ENCODE measurements at regions of chr19 and their contacts with region 1.

Region 1: GRCh38 chr19:43532962-43533545 is at the start of gene ZNF575:
- DNase-seq: peak; percentile 61 to 91 (median 87)
- ATAC-seq: peak; percentile 64
- H3K4me3 ChIP-seq: peak within 1 kb of the TSS; percentile 98
- H3K4me3 Mint-ChIP-seq: peak within 1 kb of the TSS; percentile 88 to 98 (median 95)
- H3K27ac ChIP-seq: peak within 1 kb of the TSS; percentile 68
- H3K27ac Mint-ChIP-seq: peak within 1 kb of the TSS; percentile 90 to 98 (median 95)
- H3K4me1 ChIP-seq: peaks cover 12 to 14% of the 10 kb centered on the region in 2 donors
- H3K4me1 Mint-ChIP-seq: peaks cover 5 to 27% (median 18%) of the 10 kb centered on the region in 7 donors
- H3K27me3 ChIP-seq: no peaks in the 10 kb centered on the region
- H3K27me3 Mint-ChIP-seq: no peaks in the 10 kb centered on the region
- total RNA-seq, gene ZNF575: 4.5 to 10.7 (median 5.6) TPM

Region 2: GRCh38 chr19:43545981-43546380 is 12.9 kb after region 1 on chr19:
- CTCF ChIA-PET with region 1: no interaction called
- POLR2A ChIA-PET with region 1: no interaction called
- intact Hi-C with region 1: no loop called
- DNase-seq: no peak
- ATAC-seq: no peak
- H3K4me3 ChIP-seq: no peak overlapping the region
- H3K4me3 Mint-ChIP-seq: no peak overlapping the region
- H3K27ac ChIP-seq: no peak overlapping the region
- H3K27ac Mint-ChIP-seq: peak overlapping the region in 3 of 9 donors; percentile 33 to 74 (median 56)
- H3K4me1 ChIP-seq: no peaks in the 10 kb centered on the region
- H3K4me1 Mint-ChIP-seq: peaks cover 0 to 4% (median 0%) of the 10 kb centered on the region in 7 donors
- H3K27me3 ChIP-seq: no peaks in the 10 kb centered on the region
- H3K27me3 Mint-ChIP-seq: no peaks in the 10 kb centered on the region

Region 3: GRCh38 chr19:43562698-43563241 is 29.7 kb after region 1 on chr19:
- CTCF ChIA-PET with region 1: interaction called, 4 read pairs
- POLR2A ChIA-PET with region 1: interaction called, 16 read pairs
- intact Hi-C with region 1: loop called (anchors 1 to 2 kb)
- DNase-seq: peak; percentile 43 to 83 (median 75)
- ATAC-seq: peak; percentile 91
- H3K4me3 ChIP-seq: peak overlapping the region; percentile 32
- H3K4me3 Mint-ChIP-seq: peak overlapping the region; percentile 63 to 97 (median 87)
- H3K27ac ChIP-seq: peak overlapping the region; percentile 79
- H3K27ac Mint-ChIP-seq: peak overlapping the region; percentile 75 to 99 (median 96)
- H3K4me1 ChIP-seq: peaks cover 31 to 40% of the 10 kb centered on the region in 2 donors
- H3K4me1 Mint-ChIP-seq: peaks cover 33 to 65% (median 63%) of the 10 kb centered on the region in 7 donors
- H3K27me3 ChIP-seq: no peaks in the 10 kb centered on the region
- H3K27me3 Mint-ChIP-seq: no peaks in the 10 kb centered on the region

Region 4: DNA sequence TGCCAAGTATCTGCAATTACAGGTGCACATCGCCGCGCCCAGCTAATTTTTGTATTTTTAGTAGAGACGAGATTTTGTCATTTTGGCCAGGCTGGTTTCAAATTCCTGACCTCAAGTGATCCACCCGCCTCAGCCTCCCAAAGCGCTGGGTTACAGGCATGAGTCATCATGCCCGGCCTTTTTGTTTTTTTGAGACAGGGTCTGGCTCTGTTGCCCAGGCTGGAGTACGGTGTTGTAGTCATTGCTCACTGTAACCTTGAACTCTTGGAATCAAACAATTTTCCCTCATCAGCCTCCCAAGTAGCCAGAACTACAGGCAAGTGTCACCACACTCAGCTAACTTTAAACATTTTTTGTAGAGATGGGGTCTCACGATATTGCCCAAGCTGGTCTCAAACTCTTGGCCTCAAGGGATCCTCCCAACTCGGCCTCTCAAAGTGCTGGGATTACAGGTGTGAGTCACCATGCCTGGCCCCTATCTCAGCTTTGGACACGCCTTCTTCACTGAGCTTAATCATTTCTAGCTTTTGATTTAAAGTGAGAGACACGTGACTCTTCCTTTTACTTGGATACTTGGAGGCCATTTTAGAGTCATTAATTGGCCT is 178.8 kb after region 1 on chr19:
- CTCF ChIA-PET with region 1: no interaction called
- POLR2A ChIA-PET with region 1: no interaction called
- intact Hi-C with region 1: no loop called
- DNase-seq: no peak
- ATAC-seq: no peak
- H3K4me3 ChIP-seq: no peak overlapping the region
- H3K4me3 Mint-ChIP-seq: no peak overlapping the region
- H3K27ac ChIP-seq: no peak overlapping the region
- H3K27ac Mint-ChIP-seq: peak overlapping the region in 1 of 9 donors; percentile 18
- H3K4me1 ChIP-seq: no peaks in the 10 kb centered on the region
- H3K4me1 Mint-ChIP-seq: peaks cover 0 to 1% (median 0%) of the 10 kb centered on the region in 7 donors
- H3K27me3 ChIP-seq: no peaks in the 10 kb centered on the region
- H3K27me3 Mint-ChIP-seq: peaks cover 0 to 13% (median 10%) of the 10 kb centered on the region in 5 donors

Measured in naive thymus-derived CD4-positive, alpha-beta T cell (primary cell).